Heart left ventricle (tissue), 16 donors: ENCODE measurements at regions of chr2 and their contacts with region 1.

Region 1: DNA sequence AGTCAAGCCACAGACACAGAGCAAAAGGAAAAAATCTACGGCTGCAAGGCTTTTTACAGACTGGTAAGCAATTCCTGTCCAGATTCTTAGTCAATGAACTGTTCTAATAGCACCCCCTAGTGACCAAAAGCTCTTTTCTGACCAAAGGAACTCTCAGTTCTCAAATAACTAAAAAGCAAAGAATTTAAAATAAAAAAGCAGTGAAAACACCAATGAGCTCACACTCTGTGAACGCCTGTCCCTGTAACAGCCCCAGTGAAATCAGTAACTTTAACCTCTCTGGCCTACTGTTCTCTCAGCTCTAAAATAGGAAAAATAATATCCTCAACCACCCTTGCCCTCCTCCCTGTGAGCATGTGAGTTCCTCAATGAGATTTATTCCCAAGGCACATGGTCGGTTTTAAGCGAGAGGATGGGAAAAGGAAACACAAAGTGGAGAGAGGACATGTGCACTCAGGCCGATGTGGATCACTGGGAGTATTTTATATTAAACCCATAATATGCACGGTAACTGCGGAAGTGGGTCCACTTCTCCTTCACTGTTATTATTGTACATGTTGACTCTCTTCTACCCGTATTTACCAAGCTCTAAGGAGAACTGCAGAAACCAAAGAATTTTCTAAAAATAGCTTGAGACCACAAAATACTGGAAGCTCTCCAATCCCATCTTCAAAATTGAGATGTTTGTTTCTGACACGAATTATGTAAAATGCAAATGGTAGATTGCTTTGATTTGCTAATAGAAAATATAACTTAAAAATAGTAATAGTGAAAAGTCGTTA is 128.5 kb downstream of the STK39 start:
- DNase-seq: peak in 2 of 5 donors; percentile 21 to 40
- ATAC-seq: peak; percentile 23 to 68 (median 52)
- H3K4me3 ChIP-seq: no peak overlapping the region
- H3K27ac ChIP-seq: peak overlapping the region in 7 of 12 donors; percentile 0 to 25 (median 16)
- H3K4me1 ChIP-seq: peaks cover 0 to 27% (median 13%) of the 10 kb centered on the region in 12 donors
- H3K27me3 ChIP-seq: no peaks in the 10 kb centered on the region
- CTCF ChIP-seq: peak; percentile 54 to 78 (median 68)
- POLR2A ChIP-seq: no peak

Region 2: DNA sequence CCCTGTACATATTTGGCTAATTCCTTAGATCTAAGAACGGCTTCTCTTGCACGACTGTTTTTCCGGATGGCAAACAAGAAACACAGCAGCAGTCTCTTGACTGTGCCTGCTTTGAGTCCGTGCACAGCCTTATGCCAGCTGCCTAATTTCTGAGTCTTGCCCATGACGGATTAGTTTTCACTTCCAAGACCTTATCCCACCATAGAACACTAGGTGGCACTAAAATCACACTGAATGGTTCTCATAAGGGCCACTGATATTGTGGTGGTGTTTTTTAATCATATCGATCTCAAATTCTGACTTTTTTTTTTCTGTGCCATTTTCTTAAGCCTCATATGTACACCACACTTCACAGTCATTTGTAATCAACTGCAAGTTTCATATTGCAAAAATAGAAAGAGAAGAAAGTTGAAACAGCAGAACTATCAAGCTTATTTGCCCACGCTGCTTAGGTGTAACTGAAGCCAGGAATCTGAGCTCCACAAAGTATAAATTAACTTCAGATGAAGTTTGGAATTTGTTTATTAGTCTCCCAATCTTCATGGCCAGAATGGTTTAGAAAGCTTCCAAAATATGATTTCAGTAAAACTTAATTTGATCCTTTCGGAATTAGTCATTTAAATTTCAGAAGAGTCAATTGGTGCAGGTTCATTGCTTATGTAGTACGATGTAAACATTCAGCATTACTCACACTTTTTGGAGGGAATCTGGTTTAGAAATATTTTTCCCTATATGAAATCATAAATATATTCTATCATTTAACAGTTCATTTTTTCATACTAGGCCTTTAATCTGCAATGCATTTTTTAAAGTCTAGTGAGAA is 1579.4 kb before region 1 on chr2:
- intact Hi-C with region 1: loop called in 6 of 10 experiments (anchors 5 to 10 kb)
- DNase-seq: no peak
- ATAC-seq: peak; percentile 51 to 87 (median 74)
- H3K4me3 ChIP-seq: no peak overlapping the region
- H3K27ac ChIP-seq: no peak overlapping the region
- H3K4me1 ChIP-seq: peaks cover 0 to 5% (median 0%) of the 10 kb centered on the region in 12 donors
- H3K27me3 ChIP-seq: peaks cover 0 to 3% (median 0%) of the 10 kb centered on the region in 9 donors
- CTCF ChIP-seq: peak; percentile 63 to 82 (median 73)
- POLR2A ChIP-seq: no peak

Region 3: GRCh38 chr2:167264380-167264779 is 854.5 kb before region 1 on chr2:
- intact Hi-C with region 1: loop called in 1 of 10 experiments (anchors 5 kb)
- DNase-seq: no peak
- ATAC-seq: peak in 3 of 4 donors; percentile 56 to 72 (median 58)
- H3K4me3 ChIP-seq: no peak overlapping the region
- H3K27ac ChIP-seq: no peak overlapping the region
- H3K4me1 ChIP-seq: peaks cover 0 to 5% (median 0%) of the 10 kb centered on the region in 12 donors
- H3K27me3 ChIP-seq: no peaks in the 10 kb centered on the region
- CTCF ChIP-seq: peak in 8 of 12 donors; percentile 14 to 40 (median 28)
- POLR2A ChIP-seq: no peak

Region 4: GRCh38 chr2:167675906-167676305 is 443.0 kb before region 1 on chr2:
- intact Hi-C with region 1: no loop called
- DNase-seq: no peak
- ATAC-seq: no peak
- H3K4me3 ChIP-seq: no peak overlapping the region
- H3K27ac ChIP-seq: no peak overlapping the region
- H3K4me1 ChIP-seq: no peaks in the 10 kb centered on the region
- H3K27me3 ChIP-seq: no peaks in the 10 kb centered on the region
- CTCF ChIP-seq: no peak
- POLR2A ChIP-seq: no peak

Region 5: GRCh38 chr2:167964650-167965413 is 154.1 kb before region 1 on chr2:
- intact Hi-C with region 1: loop called in 9 of 10 experiments (anchors 2 to 10 kb)
- DNase-seq: no peak
- ATAC-seq: peak in 2 of 4 donors; percentile 15 to 67
- H3K4me3 ChIP-seq: no peak overlapping the region
- H3K27ac ChIP-seq: no peak overlapping the region
- H3K4me1 ChIP-seq: peaks cover 0 to 4% (median 0%) of the 10 kb centered on the region in 12 donors
- H3K27me3 ChIP-seq: no peaks in the 10 kb centered on the region
- CTCF ChIP-seq: peak in 8 of 12 donors; percentile 9 to 47 (median 29)
- POLR2A ChIP-seq: no peak

Region 6: GRCh38 chr2:168920504-168921157 is 801.7 kb after region 1 on chr2:
- intact Hi-C with region 1: loop called in 1 of 10 experiments (anchors 10 kb)
- DNase-seq: no peak
- ATAC-seq: no peak
- H3K4me3 ChIP-seq: no peak overlapping the region
- H3K27ac ChIP-seq: no peak overlapping the region
- H3K4me1 ChIP-seq: no peaks in the 10 kb centered on the region
- H3K27me3 ChIP-seq: peaks cover 0 to under 1% (median 0%) of the 10 kb centered on the region in 9 donors
- CTCF ChIP-seq: peak; percentile 44 to 73 (median 67)
- POLR2A ChIP-seq: no peak